Aorta (tissue), 5 donors: ENCODE measurements at regions of chr1 and their contacts with region 1.

Region 1: DNA sequence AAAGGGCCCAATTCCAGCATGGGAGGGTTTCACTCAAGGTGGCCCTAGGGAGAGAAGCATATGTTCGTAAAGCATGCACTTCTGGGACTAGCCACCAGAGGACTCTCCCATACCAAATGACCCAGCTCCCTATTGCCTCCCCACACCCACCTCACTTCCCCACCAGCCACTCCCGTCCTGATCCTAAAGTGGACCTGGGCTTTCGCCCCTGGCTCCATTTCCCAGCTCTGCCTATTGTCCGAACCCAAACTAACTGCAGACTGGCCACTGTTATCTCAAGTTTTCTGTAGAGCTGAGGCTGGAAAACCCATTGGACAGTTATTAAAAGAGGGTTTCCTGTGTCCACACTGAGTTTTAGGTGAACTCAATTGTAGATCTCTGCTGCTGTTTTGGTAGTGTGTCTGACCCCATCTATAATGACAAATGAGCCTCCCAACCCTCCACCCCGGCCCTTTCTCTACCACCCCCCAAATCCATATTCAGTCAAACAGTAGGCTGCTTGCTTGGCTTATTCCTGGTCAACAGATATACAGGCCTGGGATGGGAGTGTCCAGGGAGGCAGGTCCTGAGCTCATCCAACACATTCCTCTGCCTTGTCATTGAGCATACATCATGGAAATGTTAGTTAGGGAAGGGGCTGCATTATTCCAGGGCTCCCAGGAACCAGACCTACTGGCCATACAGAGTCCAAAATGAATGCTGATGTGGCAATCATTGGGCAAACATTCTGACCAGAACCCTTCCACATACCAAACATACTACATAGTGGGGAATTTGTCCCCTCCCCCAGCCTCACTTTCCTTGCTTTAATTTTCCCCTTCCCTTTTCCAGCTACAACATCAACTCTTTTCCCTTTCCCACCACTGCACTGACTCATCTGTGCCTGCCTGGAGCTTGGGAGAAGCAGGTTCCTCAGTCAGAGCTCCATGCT is 59.2 kb downstream of the ABCA4 start:
- DNase-seq: peak; percentile 75 to 82
- ATAC-seq: peak; percentile 87
- H3K4me3 ChIP-seq: no peak overlapping the region
- H3K27ac ChIP-seq: no peak overlapping the region
- H3K4me1 ChIP-seq: no peaks in the 10 kb centered on the region
- H3K27me3 ChIP-seq: no peaks in the 10 kb centered on the region

Region 2: GRCh38 chr1:94180650-94181049 is 118.9 kb after region 1 on chr1:
- intact Hi-C with region 1: loop called in 1 of 2 experiments (anchors 10 kb)
- DNase-seq: no peak
- ATAC-seq: no peak
- H3K4me3 ChIP-seq: no peak overlapping the region
- H3K27ac ChIP-seq: no peak overlapping the region
- H3K4me1 ChIP-seq: no peaks in the 10 kb centered on the region
- H3K27me3 ChIP-seq: no peaks in the 10 kb centered on the region

Region 3: DNA sequence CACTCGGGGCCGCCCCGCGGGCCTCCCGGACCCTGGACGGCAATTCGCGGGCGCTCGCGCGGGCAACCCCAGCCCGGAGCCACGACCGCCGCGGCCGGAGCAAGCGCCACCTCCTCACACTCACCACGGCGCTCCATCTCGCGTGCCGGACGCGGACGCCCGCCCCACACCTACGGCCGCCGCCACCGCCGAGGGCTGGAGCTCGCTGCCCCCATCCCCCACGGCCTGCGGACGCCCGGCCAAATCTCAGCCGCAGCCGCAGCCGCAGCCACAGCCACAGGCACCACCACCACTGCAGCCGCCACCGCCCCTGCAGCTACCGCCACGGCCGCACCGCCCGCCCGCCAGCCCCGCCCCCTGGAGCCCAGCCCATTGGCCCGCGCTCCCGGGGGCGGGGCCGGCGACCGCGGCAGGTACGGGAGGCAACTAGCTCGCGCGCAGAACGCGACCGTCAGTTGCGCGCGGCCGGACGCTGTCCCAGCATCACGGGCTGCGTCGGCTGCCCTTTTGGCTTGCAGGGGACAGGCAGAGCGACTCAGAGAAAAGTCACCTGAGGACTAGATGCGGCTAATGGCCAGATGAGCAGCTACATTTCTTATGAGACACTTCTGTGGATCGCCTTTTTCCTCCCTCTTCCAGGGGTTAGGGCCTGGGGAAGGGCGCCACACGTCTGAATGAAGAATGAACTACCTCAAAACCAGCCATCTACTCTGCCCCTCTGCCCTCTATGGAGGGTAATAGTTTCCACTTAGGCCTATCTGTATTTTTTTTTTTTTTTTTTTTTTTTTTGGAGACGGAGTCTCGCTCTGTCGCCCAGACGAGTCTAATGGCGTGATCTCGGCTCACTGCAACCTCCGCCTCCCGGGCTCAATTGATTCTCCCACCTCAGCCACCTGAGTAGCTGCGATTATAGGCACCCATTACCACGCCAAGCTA is 175.8 kb after region 1 on chr1 and contains the start of gene ARHGAP29:
- intact Hi-C with region 1: loop called in 1 of 2 experiments (anchors 2 kb)
- DNase-seq: peak; percentile 86 to 94
- ATAC-seq: peak; percentile 95
- H3K4me3 ChIP-seq: peak within 1 kb of the TSS; percentile 45 to 60
- H3K27ac ChIP-seq: peak within 1 kb of the TSS in 1 of 2 donors; percentile 73
- H3K4me1 ChIP-seq: peaks cover 0 to 3% of the 10 kb centered on the region in 2 donors
- H3K27me3 ChIP-seq: peaks cover 0 to 2% of the 10 kb centered on the region in 2 donors
- total RNA-seq, gene ARHGAP29: 40.1 to 65.4 TPM

Region 4: DNA sequence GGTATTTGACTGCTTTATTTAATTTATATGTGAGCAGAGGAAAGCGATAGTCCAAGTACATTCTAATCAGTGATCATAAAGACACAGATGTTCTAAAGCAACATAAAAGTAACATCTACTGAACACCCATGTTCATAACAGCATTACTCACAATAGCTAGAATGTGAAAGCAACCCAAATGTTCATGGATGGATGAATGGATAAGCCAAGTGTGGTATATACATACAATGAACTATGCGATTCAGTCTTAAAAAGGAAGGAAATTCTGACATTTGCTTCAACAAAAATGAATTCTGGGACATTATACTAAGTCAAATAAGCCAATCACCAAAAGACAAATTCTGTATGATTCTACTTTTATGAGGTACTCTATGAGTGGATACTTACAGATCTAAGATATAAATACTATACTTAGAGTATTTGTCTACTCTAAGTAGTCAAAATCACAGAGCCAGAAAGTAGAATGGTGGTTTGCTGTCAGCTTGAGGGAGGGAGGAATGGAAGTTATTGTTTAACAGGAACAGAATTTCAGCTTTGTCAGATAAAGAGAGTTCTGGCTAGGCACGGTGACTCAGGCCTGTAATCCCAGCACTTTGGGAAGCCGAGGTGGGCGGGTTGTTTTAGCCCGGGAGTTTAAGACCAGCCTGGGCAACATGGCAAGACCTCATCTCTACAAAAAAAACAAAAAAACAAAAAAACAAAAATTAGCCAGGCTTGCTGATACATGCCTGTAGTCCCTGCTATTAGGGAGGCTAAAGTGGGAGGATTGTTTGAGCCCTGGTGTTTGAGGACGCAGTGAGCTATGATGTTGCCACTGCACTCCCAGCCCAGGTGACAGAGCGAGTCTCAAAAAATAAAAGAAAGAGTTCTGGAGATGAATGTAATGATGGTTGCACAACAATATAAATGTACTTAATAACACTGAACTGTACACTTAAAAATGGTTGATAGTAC is 255.3 kb after region 1 on chr1:
- intact Hi-C with region 1: no loop called
- DNase-seq: no peak
- ATAC-seq: no peak
- H3K4me3 ChIP-seq: no peak overlapping the region
- H3K27ac ChIP-seq: no peak overlapping the region
- H3K4me1 ChIP-seq: peaks cover 1 to 3% of the 10 kb centered on the region in 2 donors
- H3K27me3 ChIP-seq: no peaks in the 10 kb centered on the region